ENCODE measurements at regions of chr1 and their contacts with region 1.

Region 1: GRCh38 chr1:232962771-232963745 is 12.6 kb downstream of the NTPCR start:
- DNase-seq: no peak
- H3K4me3 Mint-ChIP-seq: no peak overlapping the region
- H3K27ac Mint-ChIP-seq: peak overlapping the region; percentile 24
- H3K4me1 Mint-ChIP-seq: peaks cover 16% of the 10 kb centered on the region
- H3K27me3 Mint-ChIP-seq: no peaks in the 10 kb centered on the region
- CTCF ChIP-seq: no peak

Region 2: GRCh38 chr1:232982238-232982944 is 19.3 kb after region 1 on chr1:
- CTCF ChIA-PET with region 1: interaction called, 7 read pairs
- POLR2A ChIA-PET with region 1: interaction called, 10 read pairs
- intact Hi-C with region 1: no loop called
- DNase-seq: peak; percentile 74
- H3K4me3 Mint-ChIP-seq: no peak overlapping the region
- H3K27ac Mint-ChIP-seq: no peak overlapping the region
- H3K4me1 Mint-ChIP-seq: peaks cover 4% of the 10 kb centered on the region
- H3K27me3 Mint-ChIP-seq: no peaks in the 10 kb centered on the region
- CTCF ChIP-seq: no peak

Region 3: GRCh38 chr1:233121947-233122559 is 159.0 kb after region 1 on chr1:
- CTCF ChIA-PET with region 1: no interaction called
- POLR2A ChIA-PET with region 1: no interaction called
- intact Hi-C with region 1: no loop called
- DNase-seq: no peak
- H3K4me3 Mint-ChIP-seq: no peak overlapping the region
- H3K27ac Mint-ChIP-seq: no peak overlapping the region
- H3K4me1 Mint-ChIP-seq: no peaks in the 10 kb centered on the region
- H3K27me3 Mint-ChIP-seq: no peaks in the 10 kb centered on the region
- CTCF ChIP-seq: no peak